ENCODE measurements at regions of chr2 and their contacts with region 1.

Region 1: GRCh38 chr2:15577071-15577735 is 14.5 kb upstream of the DDX1 start:
- DNase-seq: peak; percentile 69
- ATAC-seq: peak; percentile 99
- H3K4me3 ChIP-seq: no peak overlapping the region
- H3K27ac ChIP-seq: no peak overlapping the region
- H3K4me1 ChIP-seq: peaks cover 0 to 5% of the 10 kb centered on the region in 2 experiments; a peak in 1 of 4 replicates
- H3K27me3 ChIP-seq: no peaks in the 10 kb centered on the region
- CTCF ChIP-seq: peak; percentile 52 to 92 (median 87); a peak in 5 of 6 replicates
- POLR2A ChIP-seq: no peak
- RAD21 ChIP-seq: peak; percentile 85

Region 2: GRCh38 chr2:14903709-14904374 is 673.4 kb before region 1 on chr2:
- CTCF ChIA-PET with region 1: no interaction called
- POLR2A ChIA-PET with region 1: no interaction called
- RAD21 ChIA-PET with region 1: no interaction called
- intact Hi-C with region 1: loop called (anchors 5 kb)
- DNase-seq: peak; percentile 39
- ATAC-seq: peak; percentile 100
- H3K4me3 ChIP-seq: no peak overlapping the region
- H3K27ac ChIP-seq: no peak overlapping the region
- H3K4me1 ChIP-seq: no peaks in the 10 kb centered on the region
- H3K27me3 ChIP-seq: no peaks in the 10 kb centered on the region
- CTCF ChIP-seq: peak; percentile 96 to 99 (median 97)
- POLR2A ChIP-seq: no peak
- RAD21 ChIP-seq: peak; percentile 66

Region 3: GRCh38 chr2:15069149-15069548 is 508.1 kb before region 1 on chr2:
- CTCF ChIA-PET with region 1: no interaction called
- POLR2A ChIA-PET with region 1: no interaction called
- RAD21 ChIA-PET with region 1: no interaction called
- intact Hi-C with region 1: loop called (anchors 10 kb)
- DNase-seq: no peak
- ATAC-seq: no peak
- H3K4me3 ChIP-seq: no peak overlapping the region
- H3K27ac ChIP-seq: no peak overlapping the region
- H3K4me1 ChIP-seq: no peaks in the 10 kb centered on the region
- H3K27me3 ChIP-seq: no peaks in the 10 kb centered on the region
- CTCF ChIP-seq: no peak
- POLR2A ChIP-seq: no peak
- RAD21 ChIP-seq: no peak

Region 4: DNA sequence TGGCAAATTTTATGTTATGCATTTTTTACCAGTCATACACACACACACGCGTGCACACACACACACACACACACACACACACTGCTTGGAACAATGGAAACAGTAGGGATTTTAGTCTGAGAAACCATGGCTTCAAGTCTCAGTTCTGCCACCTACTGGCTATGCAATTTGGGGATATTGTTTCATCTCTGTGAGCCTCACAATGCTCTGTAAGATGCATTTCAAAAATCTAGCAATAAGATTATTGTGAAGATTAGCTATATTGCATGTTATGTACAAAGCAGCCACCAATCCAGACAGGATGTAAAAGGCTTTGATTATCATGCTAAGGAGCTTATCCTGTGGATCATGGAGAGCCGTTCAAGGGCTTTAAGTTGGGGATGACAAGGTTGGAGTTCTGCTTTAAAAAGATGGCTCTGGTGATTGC is 417.4 kb before region 1 on chr2:
- CTCF ChIA-PET with region 1: no interaction called
- POLR2A ChIA-PET with region 1: no interaction called
- RAD21 ChIA-PET with region 1: no interaction called
- intact Hi-C with region 1: loop called (anchors 5 kb)
- DNase-seq: peak; percentile 38
- ATAC-seq: peak; percentile 80
- H3K4me3 ChIP-seq: no peak overlapping the region
- H3K27ac ChIP-seq: no peak overlapping the region
- H3K4me1 ChIP-seq: no peaks in the 10 kb centered on the region; a peak in 1 of 4 replicates
- H3K27me3 ChIP-seq: peaks cover 4% of the 10 kb centered on the region; the same call in 1 of the 2 replicates
- CTCF ChIP-seq: peak; percentile 31 to 69 (median 59); a peak in 5 of 6 replicates
- POLR2A ChIP-seq: no peak
- RAD21 ChIP-seq: peak; percentile 51

Region 5: DNA sequence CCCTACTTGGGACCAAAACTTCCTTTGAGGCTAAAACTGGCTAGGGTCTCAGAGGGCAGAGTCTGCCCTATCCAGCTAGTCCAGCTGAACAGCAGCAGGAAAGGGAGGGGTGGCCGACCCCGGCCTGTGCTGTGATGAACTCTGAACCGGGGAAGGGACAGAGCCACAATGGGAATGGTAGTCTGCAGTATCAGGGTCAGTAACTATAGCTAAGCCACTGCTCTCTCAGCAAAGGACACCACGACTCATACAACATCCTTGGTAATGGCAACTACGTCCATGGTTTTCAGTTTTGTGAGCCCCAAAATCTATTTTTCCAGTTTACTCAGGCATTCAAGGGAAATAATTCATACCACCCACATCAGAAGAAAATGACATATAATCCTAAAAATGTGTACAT is 91.3 kb before region 1 on chr2:
- CTCF ChIA-PET with region 1: no interaction called
- POLR2A ChIA-PET with region 1: no interaction called
- RAD21 ChIA-PET with region 1: no interaction called
- intact Hi-C with region 1: no loop called
- DNase-seq: no peak
- ATAC-seq: no peak
- H3K4me3 ChIP-seq: no peak overlapping the region
- H3K27ac ChIP-seq: no peak overlapping the region
- H3K4me1 ChIP-seq: no peaks in the 10 kb centered on the region
- H3K27me3 ChIP-seq: no peaks in the 10 kb centered on the region
- CTCF ChIP-seq: no peak
- POLR2A ChIP-seq: no peak
- RAD21 ChIP-seq: no peak

Region 6: DNA sequence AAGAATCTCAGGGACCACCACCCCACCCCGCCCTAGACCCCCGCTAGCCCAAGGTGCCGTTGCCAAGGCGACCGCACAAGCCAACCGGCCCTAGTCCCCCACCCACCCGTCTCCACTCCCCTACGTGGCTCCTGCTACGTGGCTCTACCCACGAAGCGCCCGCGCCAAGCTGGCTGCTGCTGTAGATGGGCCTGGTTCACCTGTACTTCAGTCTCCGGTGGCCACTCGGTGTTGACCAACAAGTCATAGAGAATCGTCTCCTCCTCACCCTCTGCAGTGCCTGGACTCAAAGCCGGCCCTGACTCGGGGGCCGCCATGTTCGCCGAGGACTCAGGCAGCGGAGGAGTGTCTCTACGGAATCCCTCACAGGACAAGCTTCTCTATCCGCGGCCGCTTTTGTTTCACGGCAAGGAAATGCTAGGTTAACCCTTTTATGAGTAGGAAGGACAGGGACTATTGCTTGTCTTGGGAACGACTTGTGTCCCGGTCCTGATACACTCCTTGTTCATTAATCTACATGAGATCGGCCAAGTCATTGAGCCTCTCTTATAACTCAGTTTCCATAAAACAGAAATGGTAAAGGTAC is 16.1 kb before region 1 on chr2 and contains the start of gene NBAS:
- CTCF ChIA-PET with region 1: interaction called, 13 read pairs
- POLR2A ChIA-PET with region 1: no interaction called
- RAD21 ChIA-PET with region 1: interaction called in 1 of 2 experiments, 3 read pairs
- intact Hi-C with region 1: no loop called
- DNase-seq: peak; percentile 64
- ATAC-seq: peak; percentile 85
- H3K4me3 ChIP-seq: peak within 1 kb of the TSS; percentile 75 to 79
- H3K27ac ChIP-seq: peak within 1 kb of the TSS; percentile 32
- H3K4me1 ChIP-seq: peaks cover 2 to 13% of the 10 kb centered on the region in 2 experiments; a peak in 2 of 4 replicates
- H3K27me3 ChIP-seq: no peaks in the 10 kb centered on the region
- CTCF ChIP-seq: no peak
- POLR2A ChIP-seq: peak; percentile 32
- RAD21 ChIP-seq: no peak
- total RNA-seq, gene NBAS: 32.8 TPM

Region 7: DNA sequence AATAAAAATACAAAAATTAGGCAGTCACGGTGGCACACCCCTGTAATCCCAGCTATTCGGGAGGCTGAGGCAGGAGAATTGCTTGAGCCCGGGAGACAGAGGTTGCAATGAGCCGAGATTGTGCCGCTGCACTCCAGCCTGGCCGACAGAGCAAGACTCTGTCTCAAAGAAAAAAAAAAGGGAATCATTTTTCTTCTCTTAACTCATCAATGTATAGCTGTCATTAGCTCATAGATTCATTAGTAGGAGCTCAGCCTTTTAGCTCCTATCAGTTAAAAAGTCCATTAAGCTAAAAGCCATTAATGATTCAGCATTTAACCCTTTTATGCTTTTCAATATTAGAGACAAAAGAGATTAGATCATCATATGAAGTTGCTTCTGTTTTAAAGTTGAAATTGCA is 10.3 kb before region 1 on chr2:
- CTCF ChIA-PET with region 1: interaction called, 13 read pairs
- POLR2A ChIA-PET with region 1: no interaction called
- RAD21 ChIA-PET with region 1: no interaction called
- intact Hi-C with region 1: no loop called
- DNase-seq: no peak
- ATAC-seq: no peak
- H3K4me3 ChIP-seq: no peak overlapping the region
- H3K27ac ChIP-seq: no peak overlapping the region
- H3K4me1 ChIP-seq: peaks cover 0 to under 1% of the 10 kb centered on the region in 2 experiments; a peak in 2 of 4 replicates
- H3K27me3 ChIP-seq: no peaks in the 10 kb centered on the region
- CTCF ChIP-seq: no peak
- POLR2A ChIP-seq: no peak
- RAD21 ChIP-seq: no peak

Region 8: DNA sequence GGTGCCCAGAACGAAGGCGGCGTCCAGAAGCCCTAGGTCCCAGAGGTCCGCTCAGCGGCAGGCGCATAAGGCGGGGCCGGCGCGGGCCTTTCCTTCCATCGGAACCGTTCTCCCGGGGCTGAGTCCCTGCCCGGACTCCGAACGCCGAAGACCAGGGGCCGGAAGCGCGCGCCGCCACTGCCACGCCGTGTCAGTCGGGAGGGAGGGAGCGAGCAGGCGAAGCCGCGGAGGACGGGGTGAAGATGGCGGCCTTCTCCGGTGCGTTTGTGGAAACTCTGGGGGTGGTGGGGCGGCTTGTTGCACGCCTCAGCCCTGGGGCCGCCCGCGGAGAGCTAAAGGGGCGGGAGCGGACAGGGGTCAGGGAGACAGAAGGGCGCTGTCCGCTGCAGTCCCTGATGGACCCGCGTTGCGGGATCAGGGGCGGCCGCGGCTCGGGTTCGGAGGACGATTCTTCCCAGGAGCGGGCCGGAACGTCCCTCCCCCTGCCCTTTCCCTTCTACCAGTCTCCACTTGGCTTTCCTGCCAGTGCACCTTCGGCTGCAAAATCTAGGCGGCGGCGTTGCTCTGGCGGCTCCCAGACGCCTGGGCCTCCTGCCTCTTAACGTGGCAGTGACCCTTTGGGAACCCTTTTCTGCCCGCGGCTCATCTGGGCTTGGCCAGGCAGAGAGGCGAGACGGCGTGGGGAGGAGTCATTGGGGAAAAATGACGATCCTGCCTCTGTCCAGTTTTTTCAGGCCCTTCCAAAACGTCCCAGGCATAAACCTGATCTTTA is 14.7 kb after region 1 on chr2 and contains the start of gene DDX1:
- CTCF ChIA-PET with region 1: interaction called, 16 read pairs
- POLR2A ChIA-PET with region 1: no interaction called
- RAD21 ChIA-PET with region 1: no interaction called
- intact Hi-C with region 1: no loop called
- DNase-seq: peak; percentile 54
- ATAC-seq: peak; percentile 91
- H3K4me3 ChIP-seq: peak within 1 kb of the TSS; percentile 93 to 97
- H3K27ac ChIP-seq: peak within 1 kb of the TSS; percentile 88
- H3K4me1 ChIP-seq: peaks cover 0 to 10% of the 10 kb centered on the region in 2 experiments; a peak in 2 of 4 replicates
- H3K27me3 ChIP-seq: no peaks in the 10 kb centered on the region
- CTCF ChIP-seq: no peak
- POLR2A ChIP-seq: peak; percentile 45
- RAD21 ChIP-seq: no peak
- total RNA-seq, gene DDX1: 117 TPM